ENCODE measurements at regions of chr2 and their contacts with region 1.

Region 1: GRCh38 chr2:68196120-68196716 is 38.5 kb downstream of the PNO1 start:
- H3K4me3 Mint-ChIP-seq: no peak overlapping the region
- H3K27ac Mint-ChIP-seq: no peak overlapping the region
- H3K4me1 Mint-ChIP-seq: peaks cover 43% of the 10 kb centered on the region
- H3K27me3 Mint-ChIP-seq: no peaks in the 10 kb centered on the region

Region 2: GRCh38 chr2:67797801-67798540 is 398.2 kb before region 1 on chr2:
- intact Hi-C with region 1: no loop called
- H3K4me3 Mint-ChIP-seq: no peak overlapping the region
- H3K27ac Mint-ChIP-seq: no peak overlapping the region
- H3K4me1 Mint-ChIP-seq: no peaks in the 10 kb centered on the region
- H3K27me3 Mint-ChIP-seq: peaks cover 1% of the 10 kb centered on the region

Region 3: GRCh38 chr2:68238955-68239822 is 43.0 kb after region 1 on chr2:
- intact Hi-C with region 1: loop called (anchors 5 kb)
- H3K4me3 Mint-ChIP-seq: peak overlapping the region; percentile 17
- H3K27ac Mint-ChIP-seq: no peak overlapping the region
- H3K4me1 Mint-ChIP-seq: peaks cover 51% of the 10 kb centered on the region
- H3K27me3 Mint-ChIP-seq: no peaks in the 10 kb centered on the region

Region 4: DNA sequence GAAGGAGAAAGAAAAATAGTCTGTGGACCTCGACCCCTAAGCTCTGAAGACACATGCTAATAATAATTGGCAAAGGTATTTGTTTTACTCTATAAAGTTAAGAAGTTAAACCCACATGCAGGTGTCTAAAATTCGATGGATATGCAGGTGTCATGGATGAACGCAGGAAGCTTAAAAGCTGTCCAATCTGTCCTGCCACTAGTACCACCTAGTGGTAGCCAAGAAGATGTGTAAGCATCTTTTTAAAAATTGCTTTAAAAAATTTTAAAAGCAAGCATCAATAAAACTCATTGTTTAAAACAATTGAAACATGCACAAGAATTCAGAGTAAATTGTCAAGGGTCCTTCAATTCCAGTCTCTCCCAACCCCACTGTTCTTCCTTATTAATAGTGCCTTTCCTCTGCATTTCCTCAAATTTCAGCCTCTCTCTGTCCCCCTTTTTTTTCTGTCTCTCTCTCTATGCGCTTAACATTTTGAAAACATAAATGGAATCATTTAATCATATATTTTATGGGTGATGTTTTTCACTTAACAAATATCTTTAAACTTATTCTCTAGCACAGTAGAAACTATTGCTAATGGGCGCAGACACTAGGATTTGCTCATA is 86.7 kb after region 1 on chr2:
- intact Hi-C with region 1: loop called (anchors 5 kb)
- H3K4me3 Mint-ChIP-seq: no peak overlapping the region
- H3K27ac Mint-ChIP-seq: peak overlapping the region; percentile 11
- H3K4me1 Mint-ChIP-seq: peaks cover 18% of the 10 kb centered on the region
- H3K27me3 Mint-ChIP-seq: no peaks in the 10 kb centered on the region

Measured in dendritic cell treated with granulocyte-macrophage colony-stimulating factor and Interleukin-4, amounts not matched to agents 40 ng/mL and 50 ng/mL, for 4 days (primary cell).